ENCODE measurements at regions of chr18 and their contacts with region 1.

Region 1: GRCh38 chr18:32018331-32019250 is at the start of gene RNF125:
- DNase-seq: peak; percentile 87
- ATAC-seq: peak; percentile 87
- H3K4me3 ChIP-seq: peak within 1 kb of the TSS; percentile 69 to 78
- H3K27ac ChIP-seq: peak within 1 kb of the TSS; percentile 86
- H3K4me1 ChIP-seq: peaks cover 12 to 36% of the 10 kb centered on the region in 2 experiments
- H3K27me3 ChIP-seq: no peaks in the 10 kb centered on the region
- CTCF ChIP-seq: no peak
- POLR2A ChIP-seq: no peak
- RAD21 ChIP-seq: peak; percentile 23; the same call in 1 of the 2 replicates
- total RNA-seq, gene RNF125: 7.4 TPM

Region 2: DNA sequence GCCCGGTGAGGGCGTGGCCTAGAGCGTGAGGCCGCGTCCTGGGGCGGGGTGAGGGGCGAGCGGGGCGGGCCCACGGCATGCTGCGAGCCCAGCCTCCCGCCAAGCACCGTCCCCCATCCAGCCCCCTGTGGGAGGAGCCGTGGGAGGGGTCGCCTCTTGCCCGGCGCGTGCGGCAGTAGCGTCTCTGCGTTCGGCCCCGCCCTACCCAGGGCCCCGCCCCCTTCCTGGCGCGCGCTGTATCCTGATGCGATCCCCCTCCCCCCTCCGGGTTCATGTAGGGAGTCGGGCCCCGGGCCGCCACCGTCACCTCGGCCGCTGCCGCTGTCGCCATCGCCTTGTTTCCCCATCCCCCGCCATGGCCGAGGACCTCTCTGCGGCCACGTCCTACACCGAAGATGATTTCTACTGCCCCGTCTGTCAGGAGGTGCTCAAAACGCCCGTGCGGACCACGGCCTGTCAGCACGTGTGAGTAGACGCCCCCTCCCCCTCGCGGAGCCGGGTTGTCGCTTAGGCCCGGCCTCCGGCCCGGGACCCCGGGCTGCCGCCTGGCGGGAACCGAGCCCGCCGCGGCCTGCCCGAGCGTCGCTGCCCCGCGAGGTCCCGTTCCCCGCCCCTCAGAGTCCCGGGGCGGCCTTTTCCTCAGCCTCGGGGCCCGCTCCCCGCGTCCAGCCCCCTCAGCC is 74.0 kb after region 1 on chr18:
- CTCF ChIA-PET with region 1: no interaction called
- POLR2A ChIA-PET with region 1: interaction called, 3 read pairs
- RAD21 ChIA-PET with region 1: no interaction called
- intact Hi-C with region 1: loop called (anchors 2 kb)
- DNase-seq: peak; percentile 88
- ATAC-seq: peak; percentile 93
- H3K4me3 ChIP-seq: peak overlapping the region; percentile 70 to 81
- H3K27ac ChIP-seq: peak overlapping the region; percentile 100
- H3K4me1 ChIP-seq: peaks cover 19 to 38% of the 10 kb centered on the region in 2 experiments
- H3K27me3 ChIP-seq: no peaks in the 10 kb centered on the region
- CTCF ChIP-seq: no peak
- POLR2A ChIP-seq: peak; percentile 33
- RAD21 ChIP-seq: no peak

Measured in HCT116 (cell line).